ENCODE measurements at regions of chr19 and their contacts with region 1.

Region 1: GRCh38 chr19:38335949-38336637 is 463 bp downstream of the CATSPERG start:
- DNase-seq: peak; percentile 97
- ATAC-seq: peak; percentile 92 to 94

Region 2: DNA sequence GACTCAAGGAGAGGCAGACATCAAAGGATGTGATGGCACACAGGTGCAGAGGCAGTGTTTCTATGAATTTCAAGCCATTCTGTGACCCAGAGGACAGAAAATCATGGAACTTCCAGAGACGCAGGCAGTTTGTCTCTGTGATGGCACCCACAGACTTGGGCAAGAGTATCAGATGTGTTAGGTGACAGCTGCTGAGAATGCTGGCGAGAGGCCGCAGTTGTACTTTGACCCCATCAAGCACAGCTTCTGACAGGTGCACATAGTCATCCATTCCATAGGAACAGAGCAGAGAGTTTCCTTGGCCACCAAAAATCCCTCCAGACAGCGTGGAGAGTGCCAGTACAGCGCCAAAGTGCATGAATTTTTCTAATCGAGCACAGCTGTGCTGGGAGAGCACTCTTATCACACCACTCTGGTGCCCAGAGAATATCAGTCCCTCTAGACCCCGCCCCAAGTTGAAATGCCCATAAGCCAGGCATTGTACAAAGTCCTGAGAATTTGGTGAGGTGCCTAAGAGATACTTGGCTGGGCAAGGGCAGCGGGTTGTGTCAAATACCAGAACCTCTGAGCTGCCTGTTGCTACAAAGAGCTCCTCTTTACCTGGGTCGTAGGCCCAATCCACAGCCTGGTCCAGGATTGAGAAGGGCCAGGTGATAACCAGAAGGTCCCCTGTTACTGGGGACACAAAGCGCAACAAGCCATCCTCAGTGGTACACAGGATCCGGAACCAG is 442.1 kb before region 1 on chr19:
- intact Hi-C with region 1: loop called (anchors 5 to 10 kb)
- DNase-seq: no peak
- ATAC-seq: no peak

Region 3: GRCh38 chr19:38142176-38143035 is 193.7 kb before region 1 on chr19:
- intact Hi-C with region 1: loop called (anchors 10 kb)
- DNase-seq: peak; percentile 62
- ATAC-seq: peak; percentile 53 to 81

Region 4: DNA sequence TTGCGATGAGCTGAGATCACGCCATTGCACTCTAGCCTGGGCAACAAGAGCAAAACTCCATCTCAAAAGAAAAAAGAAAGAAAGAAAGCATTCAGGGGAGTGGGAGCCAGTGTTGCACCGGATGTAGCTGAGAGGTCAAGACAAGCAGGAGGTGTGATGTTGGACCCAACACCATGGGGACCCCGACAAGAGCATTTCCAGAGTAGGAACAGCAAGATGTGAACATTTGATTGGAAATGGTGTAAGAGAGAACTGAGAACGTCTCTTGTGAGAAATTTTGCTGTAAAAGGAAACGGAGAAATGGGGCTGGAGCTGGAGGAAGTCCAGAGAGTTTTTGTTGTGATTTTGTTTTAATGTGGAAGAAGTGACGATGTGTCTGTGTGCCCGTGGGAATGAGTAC is 96.3 kb before region 1 on chr19:
- intact Hi-C with region 1: loop called (anchors 2 to 5 kb)
- DNase-seq: no peak
- ATAC-seq: no peak

Region 5: GRCh38 chr19:38245826-38246498 is 90.1 kb before region 1 on chr19:
- intact Hi-C with region 1: loop called (anchors 2 to 5 kb)
- DNase-seq: peak; percentile 59
- ATAC-seq: peak; percentile 5 to 9

Region 6: DNA sequence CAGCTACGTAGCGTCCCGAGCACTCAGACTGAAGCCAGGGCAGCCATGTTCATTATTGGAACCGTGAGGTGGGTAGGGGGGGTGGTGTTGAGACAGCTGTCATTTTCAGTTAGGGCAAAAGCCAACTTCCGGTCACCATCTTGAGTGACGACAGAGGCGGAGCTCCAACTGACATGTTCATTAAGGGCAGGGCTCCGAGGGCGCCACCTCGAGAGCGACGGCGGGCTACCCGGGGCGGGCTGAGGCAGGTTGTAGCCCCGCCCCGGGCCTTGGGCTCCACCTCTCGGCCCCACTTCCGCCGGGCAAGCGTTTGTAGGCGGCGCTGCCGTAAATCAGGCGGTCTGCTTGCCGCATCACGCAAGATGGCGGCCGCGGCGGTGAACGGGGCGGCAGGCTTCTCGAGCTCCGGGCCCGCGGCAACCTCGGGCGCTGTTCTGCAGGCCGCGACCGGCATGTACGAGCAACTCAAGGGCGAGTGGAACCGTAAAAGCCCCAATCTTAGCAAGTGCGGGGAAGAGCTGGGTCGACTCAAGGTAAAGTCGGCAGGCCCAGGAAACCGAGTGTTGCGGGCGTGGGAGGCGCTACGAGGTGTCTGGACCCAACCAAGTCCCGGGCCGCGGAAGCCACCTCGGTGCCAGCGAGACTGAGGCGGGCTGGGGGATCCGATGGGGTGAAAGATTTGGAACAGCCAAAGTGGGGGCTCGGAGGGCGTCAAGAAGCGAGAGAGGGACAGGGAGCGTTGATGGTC is 38.5 kb after region 1 on chr19 and contains the start of gene PSMD8:
- intact Hi-C with region 1: loop called in 1 of 2 experiments (anchors 1 kb)
- DNase-seq: peak; percentile 99
- ATAC-seq: peak; percentile 99
- total RNA-seq, gene PSMD8: 216 to 290 TPM

Region 7: DNA sequence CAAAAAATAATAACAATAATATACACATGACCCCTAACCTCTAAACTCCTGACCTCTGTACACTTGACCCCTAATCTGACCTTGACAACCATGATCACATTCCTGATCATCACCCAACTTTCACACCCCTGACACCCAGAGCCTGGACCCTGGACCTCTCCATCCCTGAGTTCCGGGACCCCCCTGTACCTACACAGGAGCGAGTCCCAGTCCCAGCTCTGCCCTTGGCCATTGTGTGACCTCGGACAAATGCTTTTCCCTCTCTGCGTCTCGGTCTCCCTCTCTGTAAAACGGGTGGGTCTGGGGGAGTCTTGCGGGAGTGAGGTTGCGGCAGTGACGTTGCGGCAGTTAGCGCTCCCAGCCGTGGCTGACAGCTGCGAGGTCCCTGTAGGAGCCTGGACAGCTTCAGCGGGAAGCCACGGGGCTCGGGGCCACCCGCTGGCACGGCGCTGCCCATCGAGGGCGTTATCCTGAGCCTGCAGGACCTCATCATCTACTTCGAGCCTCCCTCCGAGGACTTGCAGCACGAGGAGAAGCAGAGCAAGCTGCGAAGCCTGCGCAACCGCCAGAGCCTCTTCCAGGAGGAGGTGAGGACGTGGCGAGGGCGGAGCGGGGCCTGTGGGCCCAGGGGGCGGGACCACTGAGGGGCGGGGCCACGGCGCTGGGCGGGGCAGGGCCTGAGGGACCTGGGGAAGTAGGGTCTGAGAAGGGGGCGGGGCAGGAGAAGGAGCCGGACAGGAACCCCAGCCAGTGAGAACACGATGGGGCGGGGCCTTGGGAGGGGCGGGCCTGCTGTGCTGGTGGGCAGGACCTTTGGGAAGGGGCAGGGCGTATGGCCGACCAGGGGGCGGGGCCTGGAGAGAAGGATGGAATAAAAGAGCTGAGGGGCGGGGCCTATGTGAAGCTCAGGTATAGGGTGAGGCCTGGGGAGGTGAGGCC is 116.6 kb after region 1 on chr19:
- intact Hi-C with region 1: no loop called
- DNase-seq: no peak
- ATAC-seq: peak in 1 of 2 donors; percentile 39

Measured in left cardiac atrium (tissue), 4 donors.